GM12878 (cell line): ENCODE measurements at regions of chr4 and their contacts with region 1.

Region 1: DNA sequence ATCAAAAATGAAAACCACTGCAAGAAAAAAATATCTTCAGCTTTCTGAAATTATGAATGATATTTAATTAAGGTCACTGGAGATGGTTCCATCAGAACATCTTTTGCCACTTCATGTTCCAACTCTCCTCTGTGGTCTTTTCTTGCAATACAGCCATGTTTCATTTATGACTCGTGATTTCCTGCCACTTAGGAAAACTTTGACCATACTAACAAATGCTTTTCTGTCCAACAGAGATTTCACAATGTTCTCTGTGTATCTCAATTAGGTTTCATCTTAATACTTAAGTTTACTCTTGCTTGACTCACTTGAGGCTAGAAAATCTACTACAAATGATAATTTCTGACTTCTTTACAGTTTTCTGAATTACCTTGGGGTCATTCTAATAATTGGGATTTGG is 330.9 kb downstream of the CXXC4 start:
- DNase-seq: no peak
- ATAC-seq: no peak
- H3K4me3 ChIP-seq: no peak overlapping the region
- H3K27ac ChIP-seq: no peak overlapping the region
- H3K4me1 ChIP-seq: no peaks in the 10 kb centered on the region
- H3K27me3 ChIP-seq: no peaks in the 10 kb centered on the region
- CTCF ChIP-seq: no peak
- EP300 ChIP-seq: no peak
- POLR2A ChIP-seq: no peak
- RAD21 ChIP-seq: no peak

Region 2: DNA sequence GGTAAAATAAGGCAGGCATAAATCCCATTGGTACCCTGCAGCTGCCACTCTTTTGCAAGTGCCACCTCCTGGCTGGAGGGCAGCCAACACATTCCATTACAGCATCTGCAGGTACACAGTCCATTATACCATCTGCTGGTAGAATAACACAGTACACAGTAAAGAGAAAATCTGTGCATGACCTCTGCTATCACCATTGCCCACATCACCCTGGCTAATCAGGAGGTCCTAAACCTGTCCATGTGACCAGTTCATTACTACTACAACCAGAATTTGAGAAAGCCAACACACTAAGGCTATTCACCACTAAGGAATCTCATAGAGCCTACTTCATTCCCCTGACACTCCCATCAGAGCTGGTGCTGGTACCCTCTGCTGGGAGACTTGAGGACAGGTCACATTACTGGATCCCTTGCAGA is 267.9 kb before region 1 on chr4:
- CTCF ChIA-PET with region 1: no interaction called
- POLR2A ChIA-PET with region 1: no interaction called
- RAD21 ChIA-PET with region 1: no interaction called
- SMC1A ChIA-PET with region 1: no interaction called
- in situ Hi-C with region 1: no loop called
- intact Hi-C with region 1: no loop called
- DNase-seq: no peak
- ATAC-seq: no peak
- H3K4me3 ChIP-seq: no peak overlapping the region
- H3K27ac ChIP-seq: no peak overlapping the region
- H3K4me1 ChIP-seq: no peaks in the 10 kb centered on the region
- H3K27me3 ChIP-seq: no peaks in the 10 kb centered on the region
- CTCF ChIP-seq: no peak
- EP300 ChIP-seq: no peak
- POLR2A ChIP-seq: no peak
- RAD21 ChIP-seq: no peak

Region 3: DNA sequence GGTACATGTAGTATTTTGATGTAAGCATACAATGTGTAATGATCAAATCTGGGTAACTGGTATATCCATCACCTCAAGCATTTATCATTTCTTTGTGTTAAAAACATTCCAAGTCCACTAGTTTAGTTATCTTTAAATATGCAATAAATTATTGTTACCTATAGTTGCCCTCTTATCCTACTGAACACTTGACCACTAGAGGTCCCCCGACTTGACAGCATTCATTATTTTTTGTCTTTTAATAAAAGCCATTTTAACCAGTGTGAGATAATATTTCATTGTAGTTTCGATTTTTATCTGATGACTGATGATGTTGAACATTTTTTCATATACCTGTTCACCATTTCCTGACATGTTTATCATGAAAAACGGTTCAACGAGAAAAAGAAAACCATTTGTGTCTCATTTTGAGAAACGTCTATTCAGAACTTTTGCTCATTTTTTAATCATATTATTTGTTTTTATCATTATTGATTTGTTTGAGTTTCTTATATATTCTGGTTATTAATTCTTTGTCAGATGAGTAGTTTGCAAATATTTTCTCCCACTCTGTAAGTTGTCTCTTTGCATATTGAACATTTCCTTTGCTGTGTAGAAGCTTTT is 529.9 kb after region 1 on chr4:
- CTCF ChIA-PET with region 1: no interaction called
- POLR2A ChIA-PET with region 1: no interaction called
- RAD21 ChIA-PET with region 1: no interaction called
- SMC1A ChIA-PET with region 1: no interaction called
- in situ Hi-C with region 1: no loop called
- intact Hi-C with region 1: loop called (anchors 10 kb)
- DNase-seq: no peak
- ATAC-seq: peak; percentile 51; the same call in 2 of the 3 replicates
- H3K4me3 ChIP-seq: no peak overlapping the region
- H3K27ac ChIP-seq: no peak overlapping the region
- H3K4me1 ChIP-seq: no peaks in the 10 kb centered on the region
- H3K27me3 ChIP-seq: no peaks in the 10 kb centered on the region
- CTCF ChIP-seq: peak; percentile 5 to 29 (median 25); a peak in 2 of 6 replicates
- EP300 ChIP-seq: no peak
- POLR2A ChIP-seq: no peak
- RAD21 ChIP-seq: no peak